B cell (primary cell): ENCODE measurements at regions of chr14 and their contacts with region 1.

Region 1: DNA sequence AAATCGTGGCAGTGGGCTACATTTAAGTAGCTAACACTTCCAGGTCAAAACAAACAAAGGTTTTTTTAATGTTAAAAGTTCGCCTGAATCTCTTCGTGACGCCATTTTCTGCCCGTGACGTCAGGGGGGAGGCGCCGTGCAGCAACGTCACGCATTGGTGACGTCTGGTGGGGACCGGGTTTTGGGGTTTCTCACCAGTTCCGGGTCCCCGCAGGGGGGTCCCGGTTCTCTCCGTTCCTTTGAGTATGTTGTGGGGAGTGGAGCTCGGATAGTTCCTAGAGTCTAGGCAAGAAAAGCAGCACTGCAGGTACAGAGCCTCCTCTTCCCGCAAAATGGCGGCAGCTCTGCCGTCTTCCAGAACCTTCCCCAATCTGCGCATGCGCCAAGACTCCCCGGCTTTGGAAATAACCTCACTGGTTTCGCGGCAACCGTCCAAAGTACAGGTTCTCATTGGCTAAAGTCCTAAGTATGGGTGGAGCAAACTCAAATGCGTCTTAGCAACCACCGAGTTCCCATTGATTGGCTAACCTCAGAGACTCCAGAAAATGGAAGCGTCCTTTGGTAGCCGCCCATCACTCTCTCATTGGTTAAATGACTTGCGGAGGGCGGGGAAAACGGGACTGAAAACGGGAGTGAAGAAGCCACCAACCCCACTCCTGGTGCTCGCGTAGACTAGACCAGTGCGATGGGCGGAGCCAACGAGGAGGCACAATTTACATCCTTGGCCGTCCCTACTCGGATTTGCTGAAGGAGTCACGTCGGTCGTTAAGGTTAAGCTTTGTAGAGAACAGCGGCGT is at the start of gene RBM23:
- DNase-seq: peak; percentile 100
- ATAC-seq: peak; percentile 87
- H3K4me3 ChIP-seq: peak within 1 kb of the TSS; percentile 72 to 98 (median 96)
- H3K4me3 Mint-ChIP-seq: peak within 1 kb of the TSS; percentile 93
- H3K27ac ChIP-seq: peak within 1 kb of the TSS; percentile 98 to 99
- H3K27ac Mint-ChIP-seq: peak within 1 kb of the TSS; percentile 99
- H3K4me1 ChIP-seq: peaks cover 16 to 28% of the 10 kb centered on the region in 2 donors
- H3K4me1 Mint-ChIP-seq: peaks cover 38% of the 10 kb centered on the region
- H3K27me3 ChIP-seq: no peaks in the 10 kb centered on the region
- H3K27me3 Mint-ChIP-seq: no peaks in the 10 kb centered on the region
- CTCF ChIP-seq: no peak
- total RNA-seq, gene RBM23: 165 and 188 TPM in 2 replicates

Region 2: DNA sequence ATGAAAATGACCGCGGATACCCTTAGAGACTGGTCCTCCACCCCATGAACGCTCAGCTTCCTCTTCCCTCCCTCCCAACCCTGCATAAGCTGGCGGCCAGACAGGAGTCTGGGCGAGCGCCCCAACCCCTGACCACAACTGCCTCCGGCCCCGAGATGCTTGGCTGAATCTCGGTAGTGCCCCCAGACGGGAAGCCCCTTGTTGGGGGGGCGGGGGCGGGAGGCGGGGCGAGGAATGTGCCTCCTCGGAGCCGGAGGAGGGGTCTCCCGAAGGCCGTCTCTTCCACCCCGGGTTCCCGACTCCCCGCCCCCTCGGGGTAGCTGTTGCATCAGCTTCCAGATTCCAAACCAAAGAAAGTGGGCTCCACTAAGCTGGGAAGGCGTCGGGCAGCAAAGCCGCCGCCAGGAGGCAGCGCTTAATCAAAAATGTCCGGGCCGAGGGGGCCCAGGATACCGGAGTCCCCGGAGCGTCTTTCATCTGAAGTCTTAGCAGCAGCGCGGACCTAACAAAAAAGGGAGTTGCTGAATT is 96.4 kb before region 1 on chr14:
- CTCF ChIA-PET with region 1: no interaction called
- POLR2A ChIA-PET with region 1: no interaction called
- intact Hi-C with region 1: no loop called
- DNase-seq: peak; percentile 87
- ATAC-seq: peak; percentile 67
- H3K4me3 ChIP-seq: peak overlapping the region; percentile 49 to 85 (median 56)
- H3K4me3 Mint-ChIP-seq: peak overlapping the region; percentile 88
- H3K27ac ChIP-seq: peak overlapping the region; percentile 65 to 71
- H3K27ac Mint-ChIP-seq: peak overlapping the region; percentile 94
- H3K4me1 ChIP-seq: peaks cover 31 to 47% of the 10 kb centered on the region in 2 donors
- H3K4me1 Mint-ChIP-seq: peaks cover 61% of the 10 kb centered on the region
- H3K27me3 ChIP-seq: no peaks in the 10 kb centered on the region
- H3K27me3 Mint-ChIP-seq: no peaks in the 10 kb centered on the region
- CTCF ChIP-seq: peak; percentile 82

Region 3: DNA sequence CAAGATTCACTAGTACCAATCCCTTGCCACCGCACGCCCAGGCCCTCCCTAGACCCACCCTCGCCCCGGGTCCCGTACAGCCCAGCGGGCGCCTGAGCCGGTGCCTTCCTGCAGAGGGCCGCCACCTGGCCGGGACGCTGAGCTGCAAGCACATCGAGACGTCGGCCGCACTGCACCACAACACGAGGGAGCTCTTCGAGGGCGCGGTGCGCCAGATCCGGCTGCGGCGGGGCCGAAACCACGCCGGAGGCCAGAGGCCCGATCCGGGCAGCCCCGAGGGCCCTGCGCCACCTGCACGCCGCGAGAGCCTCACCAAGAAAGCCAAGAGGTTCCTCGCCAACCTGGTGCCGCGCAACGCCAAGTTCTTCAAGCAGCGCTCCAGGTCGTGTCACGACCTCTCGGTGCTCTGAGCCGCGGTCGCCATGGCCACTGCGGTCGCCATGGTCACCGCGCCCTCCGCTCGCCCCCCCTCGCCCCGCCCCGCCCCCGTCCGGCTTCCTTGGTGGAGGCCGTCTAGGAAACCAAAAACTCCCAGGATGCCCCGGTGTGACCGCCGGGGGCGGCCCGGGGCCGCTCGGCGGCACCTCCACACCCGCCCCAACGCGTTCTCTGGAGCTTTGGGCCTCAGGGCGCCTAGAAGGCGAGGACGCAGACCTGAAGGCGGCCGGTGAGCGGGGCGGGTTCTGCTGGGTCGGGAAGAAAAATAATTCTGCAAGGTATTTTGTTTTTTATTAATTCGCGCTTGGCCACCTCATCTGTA is 32.3 kb before region 1 on chr14:
- CTCF ChIA-PET with region 1: interaction called, 3 read pairs
- POLR2A ChIA-PET with region 1: interaction called, 13 read pairs
- intact Hi-C with region 1: loop called (anchors 1 kb)
- DNase-seq: peak; percentile 89
- ATAC-seq: peak; percentile 62
- H3K4me3 ChIP-seq: peak overlapping the region; percentile 44 to 83 (median 67)
- H3K4me3 Mint-ChIP-seq: peak overlapping the region; percentile 97
- H3K27ac ChIP-seq: peak overlapping the region; percentile 85 to 94
- H3K27ac Mint-ChIP-seq: peak overlapping the region; percentile 99
- H3K4me1 ChIP-seq: peaks cover 55 to 83% of the 10 kb centered on the region in 2 donors
- H3K4me1 Mint-ChIP-seq: peaks cover 71% of the 10 kb centered on the region
- H3K27me3 ChIP-seq: no peaks in the 10 kb centered on the region
- H3K27me3 Mint-ChIP-seq: no peaks in the 10 kb centered on the region
- CTCF ChIP-seq: peak; percentile 42

Region 4: GRCh38 chr14:22945642-22946041 is 26.6 kb after region 1 on chr14:
- CTCF ChIA-PET with region 1: no interaction called
- POLR2A ChIA-PET with region 1: no interaction called
- intact Hi-C with region 1: no loop called
- DNase-seq: no peak
- ATAC-seq: no peak
- H3K4me3 ChIP-seq: no peak overlapping the region
- H3K4me3 Mint-ChIP-seq: no peak overlapping the region
- H3K27ac ChIP-seq: no peak overlapping the region
- H3K27ac Mint-ChIP-seq: no peak overlapping the region
- H3K4me1 ChIP-seq: no peaks in the 10 kb centered on the region
- H3K4me1 Mint-ChIP-seq: no peaks in the 10 kb centered on the region
- H3K27me3 ChIP-seq: no peaks in the 10 kb centered on the region
- H3K27me3 Mint-ChIP-seq: no peaks in the 10 kb centered on the region
- CTCF ChIP-seq: no peak

Region 5: DNA sequence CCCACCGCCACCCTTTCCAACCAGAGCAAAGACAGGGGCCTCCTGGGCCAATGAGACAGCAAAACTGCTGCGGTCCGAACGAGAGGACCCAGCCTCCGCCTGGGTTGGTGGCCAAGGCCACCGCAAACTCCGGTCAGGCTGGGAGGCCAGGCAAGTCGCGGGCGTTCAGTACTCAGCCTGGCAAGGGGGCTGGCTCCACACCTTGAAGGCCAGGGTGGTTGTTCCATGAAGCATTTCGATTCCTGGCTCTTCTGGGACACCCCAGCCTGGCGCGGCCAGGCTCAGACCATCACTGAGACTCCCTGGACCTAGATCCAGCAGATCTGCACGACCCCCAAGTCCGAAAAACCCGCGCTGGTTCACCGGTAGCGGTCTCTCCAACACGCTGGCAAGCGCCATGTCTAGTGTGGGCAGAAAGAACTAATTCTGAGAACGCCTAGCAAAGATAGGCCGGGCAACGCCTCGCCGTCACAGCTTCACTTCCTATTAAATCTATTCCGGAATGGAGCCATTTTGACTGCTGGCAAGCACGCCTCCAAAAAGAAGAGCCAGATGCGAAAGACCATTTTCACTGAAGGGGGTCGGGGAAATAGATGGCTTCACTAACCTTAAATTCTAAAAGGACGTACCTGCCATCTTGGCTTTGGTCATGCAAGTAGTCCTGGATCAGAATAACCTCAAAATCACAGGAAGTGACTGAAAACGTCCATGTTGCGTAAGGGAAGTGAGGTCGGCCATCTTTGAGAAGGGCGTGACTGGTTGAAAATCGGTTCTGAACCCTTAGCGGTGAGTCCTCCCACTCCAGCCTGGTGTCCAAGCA is 115.7 kb after region 1 on chr14 and contains the start of gene PSMB5:
- CTCF ChIA-PET with region 1: no interaction called
- POLR2A ChIA-PET with region 1: no interaction called
- intact Hi-C with region 1: loop called (anchors 2 kb)
- DNase-seq: peak; percentile 96
- ATAC-seq: peak; percentile 92
- H3K4me3 ChIP-seq: peak within 1 kb of the TSS; percentile 62 to 100 (median 66)
- H3K4me3 Mint-ChIP-seq: peak within 1 kb of the TSS; percentile 86
- H3K27ac ChIP-seq: peak within 1 kb of the TSS; percentile 81 to 93
- H3K27ac Mint-ChIP-seq: peak within 1 kb of the TSS; percentile 93
- H3K4me1 ChIP-seq: peaks cover 14 to 20% of the 10 kb centered on the region in 2 donors
- H3K4me1 Mint-ChIP-seq: peaks cover 28% of the 10 kb centered on the region
- H3K27me3 ChIP-seq: no peaks in the 10 kb centered on the region
- H3K27me3 Mint-ChIP-seq: no peaks in the 10 kb centered on the region
- CTCF ChIP-seq: no peak
- total RNA-seq, gene PSMB5: 29.0 and 31.9 TPM in 2 replicates